ENCODE measurements at regions of chr12 and their contacts with region 1.

Region 1: GRCh38 chr12:15830538-15830937 is 41.4 kb upstream of the EPS8 start:
- DNase-seq: no peak
- ATAC-seq: no peak
- H3K4me3 ChIP-seq: no peak overlapping the region
- H3K27ac ChIP-seq: no peak overlapping the region
- H3K4me1 ChIP-seq: no peaks in the 10 kb centered on the region
- H3K27me3 ChIP-seq: peaks cover 0 to 2% of the 10 kb centered on the region in 2 experiments; a peak in 1 of 4 replicates
- CTCF ChIP-seq: no peak
- EP300 ChIP-seq: no peak
- POLR2A ChIP-seq: no peak
- RAD21 ChIP-seq: no peak

Region 2: GRCh38 chr12:15842108-15842507 is 11.6 kb after region 1 on chr12:
- CTCF ChIA-PET with region 1: interaction called, 10 read pairs
- POLR2A ChIA-PET with region 1: interaction called, 3 read pairs
- RAD21 ChIA-PET with region 1: interaction called, 6 read pairs
- SMC1A ChIA-PET with region 1: interaction called, 26 read pairs
- in situ Hi-C with region 1: no loop called
- intact Hi-C with region 1: no loop called
- DNase-seq: no peak
- ATAC-seq: no peak
- H3K4me3 ChIP-seq: no peak overlapping the region
- H3K27ac ChIP-seq: no peak overlapping the region
- H3K4me1 ChIP-seq: no peaks in the 10 kb centered on the region
- H3K27me3 ChIP-seq: no peaks in the 10 kb centered on the region; a peak in 1 of 4 replicates
- CTCF ChIP-seq: no peak
- EP300 ChIP-seq: no peak
- POLR2A ChIP-seq: no peak
- RAD21 ChIP-seq: no peak

Measured in GM12878 (cell line).